CD4-positive, alpha-beta memory T cell (primary cell): ENCODE measurements at regions of chr13 and their contacts with region 1.

Region 1: GRCh38 chr13:49690992-49691886 is at the start of gene EBPL:
- DNase-seq: peak; percentile 70 to 86 (median 78)
- H3K4me3 ChIP-seq: peak within 1 kb of the TSS; percentile 50 to 93
- H3K4me3 Mint-ChIP-seq: peak within 1 kb of the TSS; percentile 87 to 93 (median 90)
- H3K27ac ChIP-seq: peak within 1 kb of the TSS; percentile 55
- H3K27ac Mint-ChIP-seq: peak within 1 kb of the TSS; percentile 59 to 90 (median 74)
- H3K4me1 ChIP-seq: peaks cover 19% of the 10 kb centered on the region
- H3K4me1 Mint-ChIP-seq: peaks cover 19 to 39% (median 31%) of the 10 kb centered on the region in 4 donors
- H3K27me3 ChIP-seq: no peaks in the 10 kb centered on the region
- H3K27me3 Mint-ChIP-seq: no peaks in the 10 kb centered on the region
- total RNA-seq, gene EBPL: 15.1 to 15.3 TPM

Region 2: DNA sequence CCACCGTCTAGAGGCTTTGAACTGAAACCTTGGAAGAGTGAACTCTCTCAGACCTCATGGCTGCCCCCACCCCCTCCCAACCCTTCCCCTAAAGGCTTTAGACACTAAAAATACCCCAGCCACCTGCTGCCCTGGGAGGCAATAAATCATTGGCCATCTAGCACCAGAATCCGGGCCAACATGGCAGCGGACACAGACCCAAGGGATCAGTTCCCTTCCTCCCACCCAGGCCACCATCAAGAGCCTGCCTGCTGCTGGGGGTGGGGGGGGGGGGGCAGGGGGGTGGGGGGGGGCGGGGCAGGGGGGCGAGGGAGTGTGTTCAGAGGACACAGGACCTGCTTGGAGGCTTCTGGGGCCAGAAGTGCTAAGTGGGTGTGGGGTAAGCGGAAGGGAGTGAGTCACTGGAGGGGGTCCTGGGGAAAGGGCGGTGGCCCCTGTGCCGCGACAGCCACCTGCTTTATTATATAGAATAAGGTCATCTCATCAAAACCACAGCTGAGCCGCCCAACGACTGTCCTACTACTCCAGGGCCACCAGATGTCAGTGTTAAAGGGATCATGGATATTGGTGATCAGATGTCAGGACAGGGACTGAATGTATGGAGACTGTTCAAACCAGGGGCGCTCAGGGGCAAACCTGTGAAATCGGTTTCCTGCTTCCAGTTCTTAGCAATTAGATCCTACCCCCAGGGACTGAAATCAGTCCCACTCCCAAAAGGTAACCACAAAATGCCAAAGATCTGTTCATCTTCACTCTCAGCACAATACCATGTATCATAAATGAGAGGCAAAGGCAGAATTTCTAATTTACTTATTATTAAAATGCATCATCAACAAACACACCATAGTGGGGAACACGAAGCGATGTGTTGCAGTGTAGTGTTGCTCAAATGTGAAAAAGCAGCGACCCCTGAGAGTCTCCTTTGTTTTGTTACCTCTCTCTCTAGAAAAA is 38.6 kb before region 1 on chr13:
- CTCF ChIA-PET with region 1: no interaction called
- POLR2A ChIA-PET with region 1: no interaction called
- intact Hi-C with region 1: loop called (anchors 5 kb)
- DNase-seq: peak in 1 of 5 donors; percentile 6
- H3K4me3 ChIP-seq: no peak overlapping the region
- H3K4me3 Mint-ChIP-seq: no peak overlapping the region
- H3K27ac ChIP-seq: no peak overlapping the region
- H3K27ac Mint-ChIP-seq: no peak overlapping the region
- H3K4me1 ChIP-seq: no peaks in the 10 kb centered on the region
- H3K4me1 Mint-ChIP-seq: no peaks in the 10 kb centered on the region
- H3K27me3 ChIP-seq: no peaks in the 10 kb centered on the region
- H3K27me3 Mint-ChIP-seq: no peaks in the 10 kb centered on the region

Region 3: GRCh38 chr13:49731766-49732165 is 40.5 kb after region 1 on chr13:
- CTCF ChIA-PET with region 1: no interaction called
- POLR2A ChIA-PET with region 1: no interaction called
- intact Hi-C with region 1: loop called (anchors 5 kb)
- DNase-seq: no peak
- H3K4me3 ChIP-seq: no peak overlapping the region
- H3K4me3 Mint-ChIP-seq: no peak overlapping the region
- H3K27ac ChIP-seq: no peak overlapping the region
- H3K27ac Mint-ChIP-seq: no peak overlapping the region
- H3K4me1 ChIP-seq: no peaks in the 10 kb centered on the region
- H3K4me1 Mint-ChIP-seq: peaks cover 0 to 4% (median 2%) of the 10 kb centered on the region in 4 donors
- H3K27me3 ChIP-seq: no peaks in the 10 kb centered on the region
- H3K27me3 Mint-ChIP-seq: no peaks in the 10 kb centered on the region